Activated CD4-positive, alpha-beta memory T cell treated with anti-CD3 and anti-CD28 coated beads, Interleukin-2, amount 10 ng/mL, durations not matched to agents 7 days and 5 days (primary cell): ENCODE measurements at regions of chr9 and their contacts with region 1.

Region 1: DNA sequence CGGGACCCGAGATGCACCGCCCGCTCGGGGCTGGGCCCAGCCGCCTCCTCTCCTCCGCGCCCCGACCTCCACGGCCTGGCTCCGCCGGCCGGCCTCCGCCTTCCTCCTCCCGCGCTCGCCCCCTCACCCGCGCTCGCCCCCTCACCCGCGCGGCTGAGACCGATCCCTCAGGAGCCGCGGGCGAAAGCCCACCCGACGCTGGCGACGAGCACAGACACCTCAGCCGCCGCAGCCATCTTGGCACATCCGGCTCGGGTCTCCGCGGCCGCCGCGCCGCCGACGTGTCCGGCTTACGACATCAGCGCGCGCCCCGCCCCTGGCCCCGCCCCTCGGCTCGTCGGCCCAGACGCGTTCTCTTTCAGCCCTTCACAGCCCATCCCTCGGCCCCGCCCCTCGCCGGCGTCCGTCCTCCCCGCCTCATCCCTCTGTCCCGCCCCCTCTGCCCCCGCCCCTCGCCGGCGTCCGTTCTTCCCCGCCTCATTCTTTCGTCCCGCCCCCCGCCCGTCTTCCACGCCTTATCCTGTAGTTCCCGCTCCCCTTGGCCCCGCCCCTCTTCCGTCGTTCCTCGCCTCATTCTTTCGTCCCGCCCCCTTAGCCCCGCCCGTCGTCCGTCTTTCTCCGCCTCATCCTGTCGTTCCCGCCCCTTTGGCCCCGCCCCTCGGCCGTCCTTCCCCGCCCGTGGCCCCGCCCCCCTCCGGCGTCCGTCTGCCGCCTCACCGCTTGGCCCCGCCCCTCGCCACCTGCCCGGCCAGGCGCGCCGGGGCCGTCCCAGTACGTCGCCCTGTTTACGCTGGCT is at the start of gene SEC16A:
- DNase-seq: peak; percentile 99
- H3K4me3 Mint-ChIP-seq: peak within 1 kb of the TSS; percentile 99
- H3K27ac Mint-ChIP-seq: peak within 1 kb of the TSS; percentile 100
- H3K4me1 Mint-ChIP-seq: peaks cover 35% of the 10 kb centered on the region
- H3K27me3 Mint-ChIP-seq: no peaks in the 10 kb centered on the region
- total RNA-seq, gene SEC16A: 56.1 to 61.0 TPM

Region 2: DNA sequence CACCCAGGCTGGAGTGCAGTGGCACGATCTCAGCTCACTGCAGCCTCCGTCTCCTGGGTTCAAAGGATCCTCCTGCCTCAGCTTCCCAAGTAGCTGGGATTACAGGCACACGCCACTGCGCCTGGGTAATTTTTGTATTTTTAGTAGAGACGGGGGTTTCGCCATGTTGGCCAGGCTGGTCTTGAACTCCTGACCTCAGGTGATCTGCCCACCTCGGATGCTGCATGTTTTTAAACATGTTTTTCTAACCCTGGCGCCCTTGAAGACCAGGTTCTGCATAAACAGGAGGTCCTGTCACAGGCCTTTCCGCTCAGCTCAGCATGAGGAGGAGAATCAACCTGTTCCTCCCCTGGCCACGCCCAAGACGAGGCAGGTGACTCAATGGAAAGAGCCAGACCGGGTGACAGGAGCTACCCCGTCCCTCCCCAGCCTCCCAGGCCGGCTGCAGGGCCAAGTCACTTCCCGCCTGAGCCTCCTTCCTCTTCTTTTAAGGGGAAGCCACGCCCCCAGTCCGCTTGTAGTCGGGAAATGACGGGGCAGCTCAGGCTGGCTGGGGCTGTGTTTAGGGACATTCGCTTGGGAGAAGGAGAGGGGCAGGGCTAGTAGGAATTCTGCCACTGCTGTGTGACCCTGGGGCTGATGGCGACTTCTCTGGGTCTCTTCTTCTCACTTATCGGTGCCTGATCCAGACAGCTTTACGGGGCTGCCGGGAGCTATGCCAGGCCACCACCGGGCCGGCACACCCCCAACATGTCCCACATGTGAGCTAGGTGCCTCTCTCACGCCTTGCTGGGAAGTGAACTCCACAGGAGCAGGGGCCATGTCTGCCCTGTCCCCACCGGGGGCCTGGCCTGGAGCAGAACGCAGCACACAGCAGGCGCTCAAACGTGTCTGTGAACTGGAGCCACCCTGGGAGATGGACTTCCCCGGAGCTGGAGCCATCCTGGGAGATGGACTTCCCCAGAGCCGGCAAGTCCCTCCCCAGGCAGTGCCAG is 56.7 kb after region 1 on chr9:
- CTCF ChIA-PET with region 1: interaction called, 34 read pairs
- POLR2A ChIA-PET with region 1: interaction called, 14 read pairs
- DNase-seq: peak; percentile 97
- H3K4me3 Mint-ChIP-seq: peak overlapping the region; percentile 70
- H3K27ac Mint-ChIP-seq: peak overlapping the region; percentile 99
- H3K4me1 Mint-ChIP-seq: peaks cover 76% of the 10 kb centered on the region
- H3K27me3 Mint-ChIP-seq: no peaks in the 10 kb centered on the region

Region 3: GRCh38 chr9:136631038-136632000 is 148.3 kb after region 1 on chr9:
- CTCF ChIA-PET with region 1: interaction called, 28 read pairs
- POLR2A ChIA-PET with region 1: interaction called, 3 read pairs
- DNase-seq: peak; percentile 79
- H3K4me3 Mint-ChIP-seq: no peak overlapping the region
- H3K27ac Mint-ChIP-seq: no peak overlapping the region
- H3K4me1 Mint-ChIP-seq: no peaks in the 10 kb centered on the region
- H3K27me3 Mint-ChIP-seq: peaks cover 5% of the 10 kb centered on the region